ENCODE measurements at regions of chr10 and their contacts with region 1.

Region 1: DNA sequence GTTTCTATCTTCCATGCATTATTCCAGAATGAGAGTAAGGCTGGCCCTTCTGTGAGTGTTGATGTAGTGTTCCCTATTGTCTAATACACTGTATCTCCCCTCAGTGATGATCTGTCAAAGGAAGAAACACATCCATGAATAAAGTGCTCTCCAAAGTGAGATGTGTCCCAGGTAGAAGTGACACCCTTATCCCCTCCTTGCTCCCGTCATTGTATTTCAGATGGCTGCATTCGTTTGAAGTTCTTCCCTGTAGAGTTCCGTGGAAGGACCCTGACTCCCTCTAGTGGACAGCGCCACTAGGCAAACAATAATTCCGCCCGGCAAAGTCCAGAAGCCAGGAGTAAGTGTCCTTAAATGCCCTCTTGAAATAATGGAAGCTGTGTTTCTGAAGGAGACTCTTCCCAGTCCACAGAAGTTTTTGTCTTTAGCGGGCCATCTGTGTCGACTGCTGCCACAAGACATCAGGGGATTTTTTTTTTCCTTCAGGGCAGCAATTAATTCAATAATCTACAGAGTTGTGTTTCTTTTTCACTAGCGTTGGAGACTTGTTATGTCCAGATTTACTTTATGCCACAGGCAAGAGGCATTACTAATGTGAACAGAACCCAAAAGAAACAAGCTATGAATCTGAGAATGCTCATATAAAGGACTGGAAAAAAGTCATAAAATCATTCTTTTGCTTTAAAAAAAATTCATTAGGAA is 64.6 kb downstream of the THNSL1 start:
- DNase-seq: peak; percentile 82
- H3K4me3 Mint-ChIP-seq: no peak overlapping the region
- H3K27ac Mint-ChIP-seq: no peak overlapping the region
- H3K4me1 Mint-ChIP-seq: no peaks in the 10 kb centered on the region
- H3K27me3 Mint-ChIP-seq: no peaks in the 10 kb centered on the region
- CTCF ChIP-seq: peak; percentile 82

Region 2: DNA sequence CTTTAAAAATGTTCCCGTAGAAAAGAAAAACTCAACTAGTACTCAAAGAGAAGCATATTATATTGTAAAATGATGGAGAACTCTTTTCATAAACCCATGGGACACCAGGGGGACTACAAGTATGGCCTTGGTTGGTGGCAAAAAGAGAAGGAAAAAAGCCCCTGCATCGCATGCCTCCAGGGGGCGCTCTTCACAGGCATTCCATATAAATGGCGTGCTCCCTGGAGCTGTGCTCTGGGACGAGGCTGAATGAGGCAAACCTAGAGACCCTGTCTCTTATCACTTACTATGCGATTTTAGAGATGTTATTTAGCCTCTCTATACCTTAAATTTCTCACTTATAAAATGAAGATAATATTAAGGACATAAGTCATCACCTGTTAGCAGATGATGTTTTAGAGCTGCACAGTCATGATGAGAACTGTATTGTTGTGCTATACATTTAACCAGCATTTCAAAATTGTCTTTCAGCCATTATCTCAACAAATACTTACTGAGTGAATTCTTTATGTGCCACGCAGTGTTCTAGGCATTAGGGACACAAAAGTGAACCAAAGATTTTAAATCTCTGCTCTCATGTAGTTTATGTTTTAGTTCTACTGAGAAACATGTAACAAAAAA is 463.1 kb before region 1 on chr10:
- CTCF ChIA-PET with region 1: interaction called, 21 read pairs
- POLR2A ChIA-PET with region 1: no interaction called
- intact Hi-C with region 1: no loop called
- DNase-seq: peak; percentile 63
- H3K4me3 Mint-ChIP-seq: no peak overlapping the region
- H3K27ac Mint-ChIP-seq: peak overlapping the region; percentile 68
- H3K4me1 Mint-ChIP-seq: peaks cover 15% of the 10 kb centered on the region
- H3K27me3 Mint-ChIP-seq: no peaks in the 10 kb centered on the region
- CTCF ChIP-seq: peak; percentile 88

Region 3: GRCh38 chr10:24724381-24725228 is 356.4 kb before region 1 on chr10:
- CTCF ChIA-PET with region 1: interaction called, 4 read pairs
- POLR2A ChIA-PET with region 1: no interaction called
- intact Hi-C with region 1: loop called (anchors 5 kb)
- DNase-seq: peak; percentile 98
- H3K4me3 Mint-ChIP-seq: no peak overlapping the region
- H3K27ac Mint-ChIP-seq: peak overlapping the region; percentile 54
- H3K4me1 Mint-ChIP-seq: no peaks in the 10 kb centered on the region
- H3K27me3 Mint-ChIP-seq: no peaks in the 10 kb centered on the region
- CTCF ChIP-seq: no peak

Region 4: GRCh38 chr10:25026463-25026862 is 54.6 kb before region 1 on chr10:
- CTCF ChIA-PET with region 1: interaction called, 217 read pairs
- POLR2A ChIA-PET with region 1: interaction called, 19 read pairs
- intact Hi-C with region 1: loop called (anchors 1 kb)
- DNase-seq: peak; percentile 34
- H3K4me3 Mint-ChIP-seq: no peak overlapping the region
- H3K27ac Mint-ChIP-seq: no peak overlapping the region
- H3K4me1 Mint-ChIP-seq: no peaks in the 10 kb centered on the region
- H3K27me3 Mint-ChIP-seq: no peaks in the 10 kb centered on the region
- CTCF ChIP-seq: peak; percentile 32

Region 5: GRCh38 chr10:25047591-25048301 is 33.3 kb before region 1 on chr10:
- CTCF ChIA-PET with region 1: interaction called, 32 read pairs
- POLR2A ChIA-PET with region 1: interaction called, 4 read pairs
- intact Hi-C with region 1: no loop called
- DNase-seq: peak; percentile 71
- H3K4me3 Mint-ChIP-seq: no peak overlapping the region
- H3K27ac Mint-ChIP-seq: peak overlapping the region; percentile 5
- H3K4me1 Mint-ChIP-seq: peaks cover 17% of the 10 kb centered on the region
- H3K27me3 Mint-ChIP-seq: no peaks in the 10 kb centered on the region
- CTCF ChIP-seq: no peak

Region 6: DNA sequence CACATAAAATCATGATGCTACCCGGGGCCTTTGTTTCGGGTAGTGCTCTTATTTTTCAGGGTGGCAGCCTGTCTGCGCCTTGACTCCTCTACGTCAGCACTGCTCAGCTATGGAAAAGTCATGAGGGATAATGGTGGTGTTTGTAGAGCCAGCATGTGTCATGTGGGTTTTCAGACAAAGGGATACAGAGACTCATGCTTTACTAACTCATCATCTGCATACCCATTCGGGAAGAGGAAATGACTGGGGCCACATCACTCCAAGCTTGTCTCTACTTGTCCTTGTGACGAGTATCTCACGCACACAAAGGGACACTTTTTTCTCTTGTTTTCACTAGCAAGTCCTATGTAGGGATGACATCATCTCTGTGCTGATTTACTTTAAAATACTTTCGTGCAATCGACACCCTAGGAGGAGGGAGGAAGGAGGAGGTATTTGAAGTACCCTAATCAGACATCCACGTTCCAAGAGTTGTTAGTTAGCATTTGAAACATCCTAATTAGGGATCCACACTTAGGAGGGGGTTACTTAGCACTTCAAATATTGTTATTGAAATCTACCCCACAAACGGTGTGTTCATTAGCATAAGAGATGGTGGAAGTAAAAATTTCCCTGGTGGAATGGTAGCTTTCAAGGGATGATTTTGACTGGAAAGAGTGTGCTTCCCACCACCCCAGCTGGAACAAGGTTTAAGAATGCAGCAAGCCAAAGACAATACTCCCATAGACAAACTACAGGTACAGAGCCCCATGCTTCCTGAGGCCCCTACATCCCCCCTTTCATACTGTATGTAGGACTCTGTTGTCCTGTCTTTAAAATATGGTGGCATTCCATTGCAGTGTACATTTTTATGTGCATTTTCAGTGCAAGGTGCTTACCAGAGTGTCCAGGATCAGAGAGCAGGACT is 12.6 kb before region 1 on chr10:
- CTCF ChIA-PET with region 1: interaction called, 111 read pairs
- POLR2A ChIA-PET with region 1: interaction called, 3 read pairs
- intact Hi-C with region 1: no loop called
- DNase-seq: peak; percentile 82
- H3K4me3 Mint-ChIP-seq: no peak overlapping the region
- H3K27ac Mint-ChIP-seq: peak overlapping the region; percentile 92
- H3K4me1 Mint-ChIP-seq: peaks cover 22% of the 10 kb centered on the region
- H3K27me3 Mint-ChIP-seq: no peaks in the 10 kb centered on the region
- CTCF ChIP-seq: no peak

Measured in MCF 10A (cell line).